HCT116 (cell line): ENCODE measurements at regions of chr9 and their contacts with region 1.

Region 1: DNA sequence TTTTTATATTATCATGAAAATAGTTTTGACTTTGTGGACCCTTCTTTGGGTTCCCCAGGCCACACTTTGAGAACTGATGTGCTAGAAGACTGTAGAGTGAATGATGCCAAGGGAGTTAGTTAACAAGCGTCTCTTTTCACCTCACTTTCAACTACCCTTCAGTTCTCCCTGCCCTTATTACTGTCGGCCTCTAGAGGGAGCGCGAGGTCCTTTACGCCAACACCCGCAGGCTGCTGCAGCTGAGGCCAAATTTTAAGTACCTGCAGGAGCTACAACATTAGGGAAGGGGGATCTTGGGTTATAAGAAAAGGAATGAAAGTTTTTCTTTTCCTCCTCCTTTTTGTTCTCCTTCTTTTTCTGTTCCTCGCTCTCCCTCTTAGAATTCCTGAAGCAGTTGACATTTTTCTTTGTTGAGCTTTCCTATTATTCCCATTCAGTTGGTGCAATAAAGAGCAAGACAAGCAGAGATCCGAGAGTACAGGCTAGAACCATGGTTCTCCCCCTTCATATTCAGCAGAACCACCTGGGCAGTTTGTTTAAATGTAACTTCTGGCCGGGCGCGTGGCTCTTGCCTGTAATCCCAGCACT is 84.0 kb downstream of the ZFAND5 start:
- DNase-seq: peak; percentile 60
- ATAC-seq: peak; percentile 98
- H3K4me3 ChIP-seq: no peak overlapping the region
- H3K27ac ChIP-seq: no peak overlapping the region
- H3K4me1 ChIP-seq: no peaks in the 10 kb centered on the region
- H3K27me3 ChIP-seq: no peaks in the 10 kb centered on the region
- CTCF ChIP-seq: peak; percentile 91 to 96 (median 91)
- POLR2A ChIP-seq: no peak
- RAD21 ChIP-seq: peak; percentile 96

Region 2: DNA sequence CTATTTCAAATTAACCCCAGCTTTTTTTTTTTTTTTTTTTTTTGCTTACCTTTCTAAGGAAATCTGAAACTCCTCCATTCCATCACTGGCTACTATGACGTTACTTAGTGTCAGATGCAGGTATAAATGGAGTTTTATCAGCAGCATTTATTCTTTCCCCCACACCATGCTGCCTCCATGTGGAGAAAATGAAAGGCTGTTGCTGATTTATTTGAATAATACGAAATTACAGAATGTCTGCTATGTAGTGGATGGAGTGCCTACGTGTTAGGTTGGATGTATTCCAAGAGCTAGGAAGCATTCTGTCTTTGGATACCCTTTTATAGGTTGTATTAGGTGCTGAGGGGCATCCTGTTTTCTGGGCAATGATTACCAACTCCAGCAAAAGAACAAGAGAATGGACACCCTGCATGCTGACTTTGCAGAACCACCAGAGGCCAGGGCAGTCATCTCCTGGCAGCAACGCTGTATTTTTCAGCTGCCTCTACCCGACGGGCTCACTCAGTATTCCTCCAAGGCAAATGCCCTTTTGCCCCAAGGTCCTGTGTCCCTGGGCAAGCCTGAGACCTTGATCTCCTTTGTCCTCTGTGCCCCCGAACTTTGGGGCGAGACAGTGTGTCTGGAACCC is 472.4 kb after region 1 on chr9:
- CTCF ChIA-PET with region 1: interaction called, 14 read pairs
- POLR2A ChIA-PET with region 1: no interaction called
- RAD21 ChIA-PET with region 1: interaction called, 3 read pairs
- intact Hi-C with region 1: loop called (anchors 1 kb)
- DNase-seq: no peak
- ATAC-seq: peak; percentile 52
- H3K4me3 ChIP-seq: no peak overlapping the region
- H3K27ac ChIP-seq: no peak overlapping the region
- H3K4me1 ChIP-seq: peaks cover 0 to 5% of the 10 kb centered on the region in 2 experiments; a peak in 1 of 4 replicates
- H3K27me3 ChIP-seq: no peaks in the 10 kb centered on the region
- CTCF ChIP-seq: peak in 2 of 3 experiments; percentile 41 to 46; a peak in 3 of 6 replicates
- POLR2A ChIP-seq: no peak
- RAD21 ChIP-seq: peak; percentile 75

Region 3: GRCh38 chr9:72827950-72828731 is 547.1 kb after region 1 on chr9:
- CTCF ChIA-PET with region 1: interaction called, 39 read pairs
- POLR2A ChIA-PET with region 1: no interaction called
- RAD21 ChIA-PET with region 1: no interaction called
- intact Hi-C with region 1: no loop called
- DNase-seq: no peak
- ATAC-seq: peak; percentile 34; the same call in 1 of the 2 replicates
- H3K4me3 ChIP-seq: no peak overlapping the region
- H3K27ac ChIP-seq: no peak overlapping the region
- H3K4me1 ChIP-seq: peaks cover 5 to 10% of the 10 kb centered on the region in 2 experiments
- H3K27me3 ChIP-seq: no peaks in the 10 kb centered on the region
- CTCF ChIP-seq: no peak
- POLR2A ChIP-seq: no peak
- RAD21 ChIP-seq: no peak